Heart left ventricle (tissue), 16 donors: ENCODE measurements at regions of chr18 and their contacts with region 1.

Region 1: DNA sequence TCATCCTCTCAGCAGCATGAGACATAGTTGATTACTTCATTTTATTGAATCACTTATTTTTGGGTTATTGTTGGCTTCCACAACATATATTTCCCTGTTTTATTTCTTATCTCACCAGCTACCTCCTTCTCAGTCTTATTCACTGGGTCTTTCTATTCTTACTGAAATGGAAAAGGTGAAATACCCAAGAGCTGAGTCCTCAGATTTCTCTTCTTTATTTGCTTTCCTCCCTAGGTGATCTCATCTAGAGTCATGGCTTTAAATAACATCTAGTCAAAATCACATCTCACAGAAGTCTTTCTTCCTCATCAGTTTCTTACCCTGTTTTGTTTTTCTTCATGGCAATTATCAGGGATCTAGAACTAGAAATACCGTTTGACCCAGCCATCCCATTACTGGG is 105.0 kb upstream of the RBBP8 start:
- DNase-seq: no peak
- ATAC-seq: no peak
- H3K4me3 ChIP-seq: no peak overlapping the region
- H3K27ac ChIP-seq: no peak overlapping the region
- H3K4me1 ChIP-seq: no peaks in the 10 kb centered on the region
- H3K27me3 ChIP-seq: no peaks in the 10 kb centered on the region
- CTCF ChIP-seq: no peak
- POLR2A ChIP-seq: no peak

Region 2: GRCh38 chr18:22773944-22774343 is 54.2 kb before region 1 on chr18:
- intact Hi-C with region 1: no loop called
- DNase-seq: no peak
- ATAC-seq: no peak
- H3K4me3 ChIP-seq: no peak overlapping the region
- H3K27ac ChIP-seq: no peak overlapping the region
- H3K4me1 ChIP-seq: peaks cover 0 to 10% (median 6%) of the 10 kb centered on the region in 12 donors
- H3K27me3 ChIP-seq: no peaks in the 10 kb centered on the region
- CTCF ChIP-seq: no peak
- POLR2A ChIP-seq: no peak

Region 3: GRCh38 chr18:22872900-22873551 is 44.9 kb after region 1 on chr18:
- intact Hi-C with region 1: loop called in 1 of 10 experiments (anchors 5 kb)
- DNase-seq: no peak
- ATAC-seq: no peak
- H3K4me3 ChIP-seq: no peak overlapping the region
- H3K27ac ChIP-seq: no peak overlapping the region
- H3K4me1 ChIP-seq: no peaks in the 10 kb centered on the region
- H3K27me3 ChIP-seq: peaks cover 0 to 2% (median 0%) of the 10 kb centered on the region in 9 donors
- CTCF ChIP-seq: no peak
- POLR2A ChIP-seq: no peak